PC-9 (cell line): ENCODE measurements at regions of chr11 and their contacts with region 1.

Region 1: DNA sequence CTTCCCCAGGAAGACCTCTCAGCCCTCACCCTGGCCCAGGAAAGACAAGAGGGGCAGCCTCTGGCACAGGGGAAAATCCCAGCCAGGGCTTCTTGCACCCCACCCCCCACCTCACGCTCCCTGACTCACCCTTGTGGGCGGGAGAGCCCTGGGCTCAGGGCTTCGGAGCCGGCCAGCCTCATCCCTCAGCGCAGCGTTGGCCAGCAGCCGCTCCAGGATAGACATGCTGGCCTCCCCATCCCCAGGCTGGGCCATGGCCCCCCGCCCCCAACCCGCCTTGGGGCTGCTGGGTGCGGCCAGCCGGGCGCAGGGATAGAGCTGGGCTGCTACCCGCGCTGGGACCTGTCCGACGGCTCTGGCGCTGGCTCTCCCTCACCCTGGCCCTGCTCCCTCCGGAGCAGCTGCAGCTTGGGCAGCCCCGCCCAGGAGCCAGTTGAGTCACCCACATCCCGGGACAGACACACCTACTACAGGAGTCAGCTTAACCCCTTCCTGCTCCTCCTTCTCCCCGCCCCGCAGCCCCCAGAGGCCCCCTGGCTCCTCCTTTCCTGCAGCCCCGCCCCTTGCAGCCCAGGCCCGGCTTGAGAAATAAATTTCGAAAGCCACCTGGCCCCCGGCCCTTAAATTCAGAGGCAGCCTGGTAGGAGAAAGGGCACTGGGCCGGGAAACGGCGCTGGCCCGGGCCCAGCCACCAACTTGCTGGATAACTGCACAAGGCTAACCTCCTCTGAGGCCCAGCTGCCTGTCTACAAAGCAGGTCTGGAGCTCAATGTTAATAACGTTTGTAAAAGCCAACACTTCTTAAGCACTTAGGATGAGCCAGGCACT is 13.4 kb downstream of the TNKS1BP1 start:
- DNase-seq: peak; percentile 94 to 99
- H3K4me3 ChIP-seq: peak overlapping the region; percentile 57
- H3K27ac ChIP-seq: peak overlapping the region; percentile 67
- H3K4me1 ChIP-seq: peaks cover 54% of the 10 kb centered on the region
- H3K27me3 ChIP-seq: no peaks in the 10 kb centered on the region
- CTCF ChIP-seq: no peak

Region 2: GRCh38 chr11:57205041-57205671 is 106.2 kb before region 1 on chr11:
- CTCF ChIA-PET with region 1: no interaction called
- POLR2A ChIA-PET with region 1: no interaction called
- intact Hi-C with region 1: no loop called
- DNase-seq: peak in 1 of 2 experiments; percentile 52
- H3K4me3 ChIP-seq: no peak overlapping the region
- H3K27ac ChIP-seq: no peak overlapping the region
- H3K4me1 ChIP-seq: no peaks in the 10 kb centered on the region
- H3K27me3 ChIP-seq: peaks cover 50% of the 10 kb centered on the region
- CTCF ChIP-seq: no peak

Region 3: DNA sequence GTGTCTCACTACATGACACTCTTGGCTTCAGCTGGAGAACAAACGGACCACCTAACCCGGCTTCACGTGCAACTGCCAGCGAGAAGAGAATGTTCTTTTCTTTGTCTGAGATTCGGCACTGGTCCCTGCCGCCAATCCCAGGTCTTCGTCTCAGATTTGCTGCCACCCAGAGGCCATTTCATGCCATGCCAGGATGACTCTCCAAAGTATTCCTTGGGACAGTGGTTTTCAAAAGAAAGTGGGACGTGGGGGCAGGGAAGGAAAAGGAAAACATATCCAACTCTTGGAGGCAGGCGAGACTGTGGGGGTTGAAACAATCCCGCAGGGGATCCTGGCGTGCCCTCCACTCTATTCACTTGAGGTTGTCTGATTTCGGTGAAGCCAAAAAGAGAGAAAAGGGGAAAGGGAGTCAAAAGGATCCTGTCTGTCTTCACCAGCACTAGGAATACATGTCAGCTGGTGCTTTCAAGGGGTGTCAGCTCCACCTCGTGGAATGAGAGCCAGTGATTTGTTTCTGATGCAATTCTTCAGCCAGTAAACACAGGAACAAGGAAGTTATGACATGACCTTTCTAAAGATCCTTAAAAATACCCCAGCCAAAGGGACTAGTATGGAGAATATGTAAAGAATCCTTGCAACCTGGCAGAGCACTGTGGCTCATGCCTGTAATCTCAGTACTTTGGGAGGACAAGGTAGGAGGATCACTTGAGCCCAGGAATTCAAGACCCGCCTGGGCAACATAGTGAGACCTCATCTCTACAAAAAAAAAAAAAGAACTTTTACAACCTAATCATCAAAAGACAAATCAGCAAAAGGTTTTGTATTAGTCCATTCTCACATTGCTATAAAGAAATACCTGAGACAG is 33.2 kb before region 1 on chr11:
- CTCF ChIA-PET with region 1: no interaction called
- POLR2A ChIA-PET with region 1: no interaction called
- intact Hi-C with region 1: loop called (anchors 1 kb)
- DNase-seq: peak; percentile 78 to 94
- H3K4me3 ChIP-seq: peak overlapping the region; percentile 49
- H3K27ac ChIP-seq: peak overlapping the region; percentile 90
- H3K4me1 ChIP-seq: peaks cover 38% of the 10 kb centered on the region
- H3K27me3 ChIP-seq: no peaks in the 10 kb centered on the region
- CTCF ChIP-seq: peak; percentile 89